Heart left ventricle (tissue), 16 donors: ENCODE measurements at regions of chr3 and their contacts with region 1.

Region 1: DNA sequence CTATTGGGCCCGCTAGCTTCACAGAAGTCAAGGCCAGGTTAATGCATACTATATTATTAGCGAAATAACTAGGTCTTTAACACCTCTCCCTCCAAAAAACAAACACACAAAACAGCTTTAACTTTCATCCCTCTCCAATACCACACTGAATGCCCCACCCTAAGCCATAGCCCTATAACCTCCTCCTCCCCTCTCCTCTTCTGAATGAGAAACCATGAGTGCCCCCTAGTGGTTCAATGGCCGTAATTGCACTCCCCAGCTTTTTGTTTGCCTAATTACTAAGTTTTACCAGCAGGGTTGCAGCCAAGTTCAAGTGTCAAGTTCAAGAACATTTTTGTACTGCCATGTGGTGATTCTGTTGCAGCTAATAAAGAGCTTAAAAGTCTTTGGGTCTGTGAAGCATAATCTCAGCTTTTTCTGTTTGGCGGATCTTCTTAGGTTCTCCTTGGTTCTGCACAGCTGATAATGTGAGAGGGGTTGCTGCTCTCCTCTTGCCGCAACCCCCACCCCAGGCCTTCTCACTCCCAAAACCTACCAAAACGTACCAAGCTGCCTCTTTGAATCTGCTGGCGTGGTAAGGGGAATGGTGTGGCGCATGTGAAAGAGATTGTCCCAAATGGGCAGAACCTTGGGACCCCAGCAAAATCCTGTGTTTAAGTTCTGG is 57.9 kb downstream of the RPL22L1 start:
- DNase-seq: peak in 4 of 5 donors; percentile 35 to 48 (median 38)
- ATAC-seq: peak in 3 of 4 donors; percentile 64 to 83 (median 79)
- H3K4me3 ChIP-seq: no peak overlapping the region
- H3K27ac ChIP-seq: no peak overlapping the region
- H3K4me1 ChIP-seq: peaks cover 0 to 11% (median 0%) of the 10 kb centered on the region in 12 donors
- H3K27me3 ChIP-seq: no peaks in the 10 kb centered on the region
- CTCF ChIP-seq: peak; percentile 78 to 91 (median 85)
- POLR2A ChIP-seq: no peak

Region 2: DNA sequence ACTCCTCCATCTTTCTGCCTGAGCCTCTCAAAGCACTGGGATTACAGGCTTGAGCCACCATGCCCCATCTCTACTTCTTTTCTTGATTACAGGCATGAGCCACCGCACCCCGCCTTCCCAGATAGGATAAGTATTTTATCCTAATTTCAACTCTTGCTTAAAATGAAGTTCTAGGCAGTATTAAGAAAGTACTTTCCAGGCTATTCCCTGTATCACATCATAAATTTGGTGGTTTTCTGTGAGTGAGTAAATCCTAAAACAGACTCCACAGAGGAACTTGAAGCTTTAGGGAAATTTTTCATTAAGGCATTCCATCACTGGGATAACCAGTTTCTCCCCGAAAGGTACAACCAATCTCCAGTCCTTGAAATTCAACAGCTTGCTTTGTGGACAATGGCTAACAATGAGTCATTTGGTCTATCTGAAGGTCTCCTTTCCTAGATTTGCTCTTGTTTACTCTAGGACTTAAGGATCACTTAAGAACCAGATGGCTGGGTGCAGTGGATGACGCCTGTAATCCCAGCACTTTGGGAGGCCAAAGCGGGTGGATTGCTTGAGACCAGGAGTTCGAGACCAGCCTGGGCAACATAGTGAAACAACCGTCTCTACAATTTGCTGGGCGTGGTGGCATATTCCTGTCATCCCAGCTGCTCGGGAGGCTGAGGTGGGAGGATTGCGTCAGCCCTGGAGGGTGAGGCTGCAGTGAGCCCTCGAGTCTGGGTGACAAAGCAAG is 504.2 kb before region 1 on chr3:
- intact Hi-C with region 1: loop called in 8 of 10 experiments (anchors 1 to 5 kb)
- DNase-seq: no peak
- ATAC-seq: no peak
- H3K4me3 ChIP-seq: no peak overlapping the region
- H3K27ac ChIP-seq: no peak overlapping the region
- H3K4me1 ChIP-seq: no peaks in the 10 kb centered on the region
- H3K27me3 ChIP-seq: no peaks in the 10 kb centered on the region
- CTCF ChIP-seq: no peak
- POLR2A ChIP-seq: no peak

Region 3: DNA sequence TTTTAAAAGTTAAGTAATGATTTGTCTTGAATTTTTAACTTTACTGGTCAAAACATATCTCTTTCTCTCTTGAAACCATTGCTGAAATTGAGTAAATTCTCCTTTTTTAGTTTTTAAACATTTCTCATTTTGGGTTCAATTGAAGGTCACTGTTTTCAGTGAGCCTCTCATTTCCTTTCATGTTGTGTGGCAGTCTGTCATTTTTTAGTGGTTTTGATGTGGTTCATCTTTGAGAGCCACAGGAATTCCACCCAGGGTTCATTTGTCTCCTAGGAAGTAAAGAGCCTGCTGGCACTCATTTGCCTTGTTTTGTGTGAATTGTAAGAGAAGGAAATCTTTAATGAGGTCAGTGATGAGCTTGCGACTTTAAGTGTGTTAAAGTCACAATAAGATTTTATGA is 383.0 kb before region 1 on chr3:
- intact Hi-C with region 1: loop called in 1 of 10 experiments (anchors 5 kb)
- DNase-seq: no peak
- ATAC-seq: no peak
- H3K4me3 ChIP-seq: no peak overlapping the region
- H3K27ac ChIP-seq: no peak overlapping the region
- H3K4me1 ChIP-seq: no peaks in the 10 kb centered on the region
- H3K27me3 ChIP-seq: no peaks in the 10 kb centered on the region
- CTCF ChIP-seq: no peak
- POLR2A ChIP-seq: no peak

Region 4: DNA sequence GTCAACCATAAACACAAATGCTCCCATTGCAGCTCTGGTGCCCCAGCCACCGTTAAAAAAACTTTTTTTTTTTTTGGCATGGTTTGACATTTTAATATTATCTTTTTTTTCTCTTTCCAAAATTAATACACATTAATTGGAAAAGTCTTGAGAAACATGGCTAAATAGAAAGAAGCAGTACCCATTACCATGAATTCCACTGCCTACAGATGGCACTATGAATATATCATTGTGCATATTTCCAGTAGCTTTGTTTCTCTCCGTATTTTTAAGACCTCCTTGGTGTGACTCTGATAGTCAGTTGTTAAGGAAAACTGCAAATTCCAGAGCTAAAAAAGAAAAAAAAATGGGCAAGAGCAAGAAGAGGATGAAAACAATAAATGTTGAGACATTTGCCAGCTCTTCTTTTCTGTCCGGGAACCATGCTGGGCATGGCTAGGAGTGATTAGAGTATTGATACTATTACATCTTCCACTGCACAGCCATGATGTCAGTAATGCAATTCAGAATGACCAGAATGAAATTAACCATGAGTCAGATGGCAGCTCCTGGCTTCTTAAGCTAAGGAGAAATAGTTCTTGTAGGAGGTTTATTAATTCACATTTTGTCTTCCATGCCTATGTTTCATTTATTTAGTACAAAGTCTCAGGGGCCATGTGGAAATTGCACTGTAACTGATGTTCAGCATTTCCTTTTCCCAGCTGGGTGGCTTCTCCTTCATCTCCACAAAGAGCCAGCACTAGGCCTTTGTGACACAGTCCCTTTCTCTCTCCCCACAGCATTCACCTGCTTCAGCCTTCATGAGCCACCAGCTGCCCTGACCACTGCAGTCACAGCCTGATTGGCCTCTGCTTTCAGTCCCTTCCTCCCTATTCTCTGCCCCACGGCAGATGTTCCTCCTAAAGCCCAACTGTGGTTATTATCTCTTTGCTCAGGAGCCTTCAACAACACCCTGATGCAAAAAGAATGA is 258.0 kb before region 1 on chr3:
- intact Hi-C with region 1: loop called in 7 of 10 experiments (anchors 5 to 10 kb)
- DNase-seq: no peak
- ATAC-seq: peak in 1 of 4 donors; percentile 50
- H3K4me3 ChIP-seq: no peak overlapping the region
- H3K27ac ChIP-seq: no peak overlapping the region
- H3K4me1 ChIP-seq: no peaks in the 10 kb centered on the region
- H3K27me3 ChIP-seq: peaks cover 0 to 10% (median 0%) of the 10 kb centered on the region in 9 donors
- CTCF ChIP-seq: peak in 7 of 12 donors; percentile 13 to 44 (median 36)
- POLR2A ChIP-seq: no peak

Region 5: DNA sequence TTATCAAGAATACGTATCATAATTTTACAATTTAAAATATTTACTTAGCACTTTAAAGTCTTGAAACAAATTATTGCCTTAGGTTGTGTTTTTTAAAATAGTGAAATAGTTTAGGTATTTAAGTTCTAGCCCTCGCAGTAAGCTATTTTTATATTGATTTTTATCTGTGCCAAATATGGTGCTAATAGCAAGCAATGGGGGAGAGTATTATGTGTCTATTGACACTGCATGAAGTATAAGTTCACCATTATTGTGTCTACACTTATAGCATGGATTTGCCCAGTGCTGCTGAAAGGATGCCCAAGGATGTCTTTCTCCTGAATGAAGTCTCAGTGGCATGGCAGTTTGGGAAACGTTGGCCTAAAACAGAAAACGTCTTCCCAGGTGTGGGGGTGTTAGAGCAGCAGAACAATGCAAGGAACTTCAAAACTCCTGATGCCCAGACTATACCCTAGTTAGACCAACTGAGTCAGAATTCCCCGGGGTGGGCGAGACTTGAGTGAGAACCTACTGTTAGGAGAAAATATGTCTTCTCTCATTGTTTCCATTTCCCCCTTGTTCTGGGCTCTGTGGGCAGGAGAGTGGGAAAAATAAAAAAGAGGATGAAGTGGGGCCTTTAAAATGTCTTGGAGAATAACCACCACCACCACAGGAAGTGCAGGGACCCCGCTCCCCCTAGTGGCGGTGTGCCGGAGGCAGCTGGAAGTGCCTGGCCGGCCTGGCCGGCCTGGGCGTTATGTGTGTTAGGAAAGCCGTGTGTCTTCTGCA is 122.0 kb before region 1 on chr3:
- intact Hi-C with region 1: loop called in 3 of 10 experiments (anchors 5 to 10 kb)
- DNase-seq: peak; percentile 44 to 83 (median 59)
- ATAC-seq: peak in 3 of 4 donors; percentile 76 to 89 (median 77)
- H3K4me3 ChIP-seq: no peak overlapping the region
- H3K27ac ChIP-seq: no peak overlapping the region
- H3K4me1 ChIP-seq: peaks cover 0 to 7% (median 0%) of the 10 kb centered on the region in 12 donors
- H3K27me3 ChIP-seq: no peaks in the 10 kb centered on the region
- CTCF ChIP-seq: peak; percentile 67 to 82 (median 74)
- POLR2A ChIP-seq: no peak